ENCODE measurements at regions of chr17 and their contacts with region 1.

Region 1: DNA sequence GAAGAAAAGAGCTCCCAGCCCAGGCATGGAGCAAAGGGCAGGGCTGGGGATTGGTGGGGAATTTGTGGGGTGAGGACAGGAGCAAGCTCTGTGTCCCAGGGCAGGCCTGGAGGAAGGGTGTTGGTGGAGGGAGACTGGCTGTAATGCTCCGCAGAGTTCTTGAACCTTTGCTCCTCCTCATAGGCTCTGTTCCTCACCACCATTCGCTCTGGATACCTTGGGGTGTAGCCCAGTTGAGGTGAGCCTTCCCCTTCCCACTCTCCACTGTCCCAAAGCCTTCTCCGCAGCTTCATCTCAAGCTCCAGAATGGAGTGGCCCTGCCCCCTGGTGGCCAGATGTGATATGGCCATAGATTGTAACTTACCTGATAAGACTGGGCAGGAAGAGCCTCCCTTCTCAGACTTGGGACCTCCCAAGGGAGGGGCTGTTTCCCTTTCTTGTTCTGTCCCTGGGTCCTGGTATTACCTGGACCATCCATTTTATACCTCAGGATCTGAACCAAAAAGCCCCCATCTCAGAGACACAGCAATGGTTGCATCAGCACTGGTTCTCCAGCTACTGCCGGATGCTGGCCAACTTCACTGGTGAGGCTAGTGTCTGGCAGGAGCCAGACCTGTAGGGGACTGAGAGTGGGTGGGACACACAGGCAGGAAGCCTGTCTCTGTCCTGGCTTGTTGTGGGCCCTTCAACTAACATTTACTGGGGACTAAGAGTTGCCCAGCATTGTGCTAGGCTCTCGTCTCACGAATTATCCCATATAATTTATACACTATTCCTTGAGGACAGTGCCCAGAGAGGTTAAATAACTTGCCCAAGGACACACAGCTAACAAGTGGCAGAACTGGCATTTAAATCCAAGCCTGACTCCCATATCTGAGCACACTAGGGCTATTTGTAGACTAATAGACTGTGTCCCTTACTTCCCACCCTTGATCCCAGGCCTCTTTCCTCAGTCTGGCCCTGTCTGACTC is 19.1 kb upstream of the STAC2 start:
- DNase-seq: peak; percentile 76
- ATAC-seq: peak; percentile 96
- H3K4me3 ChIP-seq: no peak overlapping the region
- H3K27ac ChIP-seq: no peak overlapping the region
- H3K4me1 ChIP-seq: no peaks in the 10 kb centered on the region
- H3K27me3 ChIP-seq: no peaks in the 10 kb centered on the region
- CTCF ChIP-seq: peak; percentile 91
- POLR2A ChIP-seq: no peak
- RAD21 ChIP-seq: peak; percentile 87

Region 2: GRCh38 chr17:38799378-38800236 is 445.3 kb before region 1 on chr17 and contains the start of gene PIP4K2B:
- CTCF ChIA-PET with region 1: no interaction called
- POLR2A ChIA-PET with region 1: no interaction called
- dilution Hi-C with region 1: no loop called
- in situ Hi-C with region 1: no loop called
- intact Hi-C with region 1: loop called (anchors 5 kb)
- DNase-seq: peak; percentile 98
- ATAC-seq: peak; percentile 94
- H3K4me3 ChIP-seq: peak within 1 kb of the TSS; percentile 61
- H3K27ac ChIP-seq: peak within 1 kb of the TSS; percentile 93
- H3K4me1 ChIP-seq: peaks cover 13% of the 10 kb centered on the region
- H3K27me3 ChIP-seq: no peaks in the 10 kb centered on the region
- CTCF ChIP-seq: no peak
- POLR2A ChIP-seq: peak; percentile 84
- RAD21 ChIP-seq: no peak
- total RNA-seq, gene PIP4K2B: 40.0 and 40.8 TPM in 2 replicates

Region 3: GRCh38 chr17:39164675-39165143 is 80.2 kb before region 1 on chr17:
- CTCF ChIA-PET with region 1: interaction called, 10 read pairs
- POLR2A ChIA-PET with region 1: no interaction called
- dilution Hi-C with region 1: no loop called
- in situ Hi-C with region 1: no loop called
- intact Hi-C with region 1: loop called (anchors 1 kb)
- DNase-seq: peak; percentile 89
- ATAC-seq: peak; percentile 96
- H3K4me3 ChIP-seq: peak overlapping the region; percentile 55
- H3K27ac ChIP-seq: no peak overlapping the region
- H3K4me1 ChIP-seq: peaks cover 5% of the 10 kb centered on the region; the same call in 1 of the 2 replicates
- H3K27me3 ChIP-seq: peaks cover 35% of the 10 kb centered on the region
- CTCF ChIP-seq: peak; percentile 86
- POLR2A ChIP-seq: no peak
- RAD21 ChIP-seq: peak; percentile 59

Region 4: DNA sequence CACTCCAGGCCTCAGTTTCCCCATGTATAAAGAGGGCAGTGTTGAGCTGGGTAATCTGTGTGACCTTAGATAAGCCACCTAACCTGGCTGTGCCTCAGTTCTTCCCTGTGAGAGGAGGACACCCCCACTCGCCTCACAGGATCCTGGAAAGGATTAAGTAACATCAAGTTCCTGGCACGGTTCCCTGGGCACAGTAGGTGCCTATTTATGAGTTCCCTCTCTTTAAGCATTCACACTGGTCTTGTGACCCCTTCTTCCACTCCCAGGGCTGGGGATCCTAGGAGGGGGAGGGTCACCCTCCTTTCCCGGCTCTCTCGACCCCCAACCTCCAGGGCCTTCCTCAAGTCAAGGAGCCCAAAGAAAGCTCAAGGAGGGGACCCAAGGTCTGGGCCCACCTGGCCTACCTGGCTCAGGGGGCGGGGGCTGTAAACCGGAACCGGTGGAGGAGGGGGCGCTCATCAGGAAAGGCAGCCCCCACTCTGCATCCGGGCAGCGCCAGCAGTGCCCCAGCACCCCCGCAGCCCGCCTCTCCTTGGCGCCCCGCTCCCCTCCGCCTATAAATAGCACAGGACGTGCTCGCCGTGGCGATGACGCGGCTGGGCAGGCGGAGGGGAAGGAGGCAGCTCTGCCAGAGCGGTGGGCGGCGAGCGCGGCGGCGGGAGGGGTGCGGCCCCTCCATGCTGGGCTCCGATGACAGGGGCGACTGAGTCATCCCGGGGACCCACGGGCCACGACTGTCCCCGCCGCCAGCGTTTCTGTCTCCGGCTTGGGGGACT is 35.4 kb before region 1 on chr17:
- CTCF ChIA-PET with region 1: interaction called, 5 read pairs
- POLR2A ChIA-PET with region 1: no interaction called
- dilution Hi-C with region 1: no loop called
- in situ Hi-C with region 1: no loop called
- intact Hi-C with region 1: loop called (anchors 1 kb)
- DNase-seq: peak; percentile 69
- ATAC-seq: peak; percentile 74
- H3K4me3 ChIP-seq: peak overlapping the region; percentile 31
- H3K27ac ChIP-seq: no peak overlapping the region; the same call in 1 of the 2 replicates
- H3K4me1 ChIP-seq: peaks cover 16% of the 10 kb centered on the region
- H3K27me3 ChIP-seq: peaks cover 2% of the 10 kb centered on the region; the same call in 1 of the 2 replicates
- CTCF ChIP-seq: no peak
- POLR2A ChIP-seq: 0 out of 2 replicates have a peak, but pooled peaks have one; percentile 22
- RAD21 ChIP-seq: no peak

Region 5: GRCh38 chr17:39294060-39294459 is 49.2 kb after region 1 on chr17:
- CTCF ChIA-PET with region 1: no interaction called
- POLR2A ChIA-PET with region 1: no interaction called
- dilution Hi-C with region 1: no loop called
- in situ Hi-C with region 1: no loop called
- intact Hi-C with region 1: no loop called
- DNase-seq: no peak
- ATAC-seq: no peak
- H3K4me3 ChIP-seq: no peak overlapping the region
- H3K27ac ChIP-seq: no peak overlapping the region
- H3K4me1 ChIP-seq: no peaks in the 10 kb centered on the region
- H3K27me3 ChIP-seq: no peaks in the 10 kb centered on the region
- CTCF ChIP-seq: no peak
- POLR2A ChIP-seq: no peak
- RAD21 ChIP-seq: no peak

Region 6: GRCh38 chr17:39304188-39304587 is 59.3 kb after region 1 on chr17:
- CTCF ChIA-PET with region 1: no interaction called
- POLR2A ChIA-PET with region 1: no interaction called
- dilution Hi-C with region 1: no loop called
- in situ Hi-C with region 1: no loop called
- intact Hi-C with region 1: no loop called
- DNase-seq: no peak
- ATAC-seq: no peak
- H3K4me3 ChIP-seq: no peak overlapping the region
- H3K27ac ChIP-seq: no peak overlapping the region
- H3K4me1 ChIP-seq: 0 out of 2 replicates have a peak, but pooled peaks cover 2% of the 10 kb centered on the region
- H3K27me3 ChIP-seq: no peaks in the 10 kb centered on the region
- CTCF ChIP-seq: no peak
- POLR2A ChIP-seq: no peak
- RAD21 ChIP-seq: no peak